Esophagus muscularis mucosa (tissue), 4 donors: ENCODE measurements at regions of chr7 and their contacts with region 1.

Region 1: GRCh38 chr7:35424869-35425495 is 171.1 kb upstream of the TBX20 start:
- DNase-seq: no peak
- H3K4me3 ChIP-seq: no peak overlapping the region
- H3K27ac ChIP-seq: no peak overlapping the region
- H3K4me1 ChIP-seq: no peaks in the 10 kb centered on the region
- H3K27me3 ChIP-seq: peaks cover 0 to 3% (median 0%) of the 10 kb centered on the region in 4 donors
- CTCF ChIP-seq: peak; percentile 48 to 64 (median 57)
- EP300 ChIP-seq: no peak
- POLR2A ChIP-seq: no peak

Region 2: GRCh38 chr7:35004531-35005095 is 420.4 kb before region 1 on chr7:
- intact Hi-C with region 1: no loop called
- DNase-seq: no peak
- H3K4me3 ChIP-seq: no peak overlapping the region
- H3K27ac ChIP-seq: no peak overlapping the region
- H3K4me1 ChIP-seq: peaks cover 8 to 9% (median 9%) of the 10 kb centered on the region in 4 donors
- H3K27me3 ChIP-seq: no peaks in the 10 kb centered on the region
- CTCF ChIP-seq: no peak
- EP300 ChIP-seq: no peak
- POLR2A ChIP-seq: no peak

Region 3: DNA sequence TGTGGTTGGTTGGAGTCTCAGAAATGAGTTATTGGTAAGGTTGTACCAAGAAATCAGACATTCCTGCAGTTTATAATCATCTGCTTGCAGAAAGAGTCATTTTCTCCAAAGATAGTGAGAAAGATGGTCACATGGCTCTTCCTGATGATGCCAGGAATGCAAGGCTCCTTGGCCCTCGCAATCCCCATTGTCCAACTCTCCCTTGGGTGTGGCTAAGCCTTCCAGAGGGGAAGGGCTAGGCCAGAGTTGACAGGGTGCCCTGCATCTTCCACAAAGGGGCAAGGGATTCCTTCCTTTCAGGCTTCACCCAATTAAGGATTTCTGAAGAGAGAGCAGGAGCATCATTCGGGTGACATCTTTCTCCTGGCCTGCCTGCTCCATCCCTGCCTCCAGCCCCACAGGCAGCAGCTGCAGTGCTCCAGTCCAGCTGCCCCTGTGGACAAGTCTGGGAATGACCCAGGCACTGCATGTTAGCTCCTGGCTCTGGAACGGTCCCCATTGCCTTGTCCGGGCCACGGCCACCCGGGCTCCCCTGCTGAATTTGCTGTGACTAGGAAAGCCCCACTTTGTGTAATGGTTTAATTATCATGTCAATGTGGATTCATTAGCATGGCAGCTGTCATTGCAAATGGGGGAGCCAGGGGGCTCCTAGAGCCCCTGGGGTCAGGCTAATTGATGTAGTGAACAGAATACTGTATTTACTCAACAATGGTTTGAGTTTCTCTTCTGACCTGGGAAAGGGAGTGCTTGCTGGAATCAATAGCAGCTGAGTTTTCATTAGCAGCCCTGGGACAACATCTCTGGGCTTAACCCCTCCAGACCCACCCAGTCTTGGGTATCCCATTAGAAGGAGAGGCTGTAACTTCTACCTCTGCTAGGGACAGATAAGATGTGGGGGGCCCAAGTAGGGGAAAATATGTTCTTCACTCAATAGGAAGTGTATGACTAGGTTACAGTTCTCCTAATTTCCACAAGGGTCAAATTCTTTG is 58.5 kb before region 1 on chr7:
- intact Hi-C with region 1: loop called (anchors 10 kb)
- DNase-seq: peak; percentile 81
- H3K4me3 ChIP-seq: no peak overlapping the region
- H3K27ac ChIP-seq: no peak overlapping the region
- H3K4me1 ChIP-seq: no peaks in the 10 kb centered on the region
- H3K27me3 ChIP-seq: no peaks in the 10 kb centered on the region
- CTCF ChIP-seq: no peak
- EP300 ChIP-seq: no peak
- POLR2A ChIP-seq: no peak

Region 4: DNA sequence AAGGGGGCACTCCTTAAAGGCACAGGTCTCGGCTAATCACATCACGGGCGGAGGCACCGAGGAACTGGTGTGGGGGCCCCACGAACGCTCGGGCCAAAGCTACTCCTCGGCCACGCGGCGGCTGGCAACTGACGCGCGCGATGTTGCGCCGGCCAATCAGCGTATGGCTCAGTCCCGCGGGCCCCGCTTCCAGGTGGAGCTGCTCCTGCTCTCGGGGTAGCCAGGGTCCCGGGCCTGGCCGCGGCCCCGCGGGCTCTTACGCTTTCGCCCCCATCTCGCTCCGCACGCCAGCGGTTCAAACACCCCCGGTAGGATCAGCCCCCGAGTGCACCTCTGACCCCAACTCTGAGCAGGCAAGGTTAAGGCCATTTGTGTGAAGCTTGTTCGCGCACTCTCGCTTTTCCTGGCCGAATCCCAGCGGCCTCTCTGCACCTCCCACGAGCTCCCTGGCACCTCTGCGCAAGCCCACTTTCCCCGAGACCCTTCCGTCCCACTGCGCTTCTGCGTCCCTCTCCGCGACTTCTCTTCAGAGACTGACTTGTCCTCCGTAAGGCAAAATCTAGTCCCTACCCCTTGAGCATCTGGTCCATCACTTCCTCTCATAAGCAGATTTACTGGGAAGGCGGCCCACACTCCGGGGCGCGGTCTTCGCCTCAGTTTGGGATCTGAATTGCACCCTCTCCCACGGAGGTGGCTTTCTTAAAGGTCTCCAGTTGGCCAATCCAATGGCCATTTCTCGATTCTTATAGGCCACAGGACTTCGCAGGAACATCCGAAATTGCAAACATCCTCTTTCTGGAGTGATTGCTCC is 29.8 kb after region 1 on chr7:
- intact Hi-C with region 1: no loop called
- DNase-seq: no peak
- H3K4me3 ChIP-seq: peak overlapping the region in 2 of 4 donors; percentile 12 to 18
- H3K27ac ChIP-seq: no peak overlapping the region
- H3K4me1 ChIP-seq: peaks cover 0 to 9% (median 8%) of the 10 kb centered on the region in 4 donors
- H3K27me3 ChIP-seq: peaks cover 0 to 34% (median 3%) of the 10 kb centered on the region in 4 donors
- CTCF ChIP-seq: no peak
- EP300 ChIP-seq: no peak
- POLR2A ChIP-seq: no peak